ENCODE measurements at regions of chr18 and their contacts with region 1.

Region 1: GRCh38 chr18:66838340-66838987 is 234.6 kb upstream of the CDH19 start:
- DNase-seq: no peak
- H3K4me3 ChIP-seq: no peak overlapping the region
- H3K27ac ChIP-seq: no peak overlapping the region
- H3K4me1 ChIP-seq: no peaks in the 10 kb centered on the region
- H3K27me3 ChIP-seq: no peaks in the 10 kb centered on the region
- CTCF ChIP-seq: no peak
- POLR2A ChIP-seq: no peak

Region 2: DNA sequence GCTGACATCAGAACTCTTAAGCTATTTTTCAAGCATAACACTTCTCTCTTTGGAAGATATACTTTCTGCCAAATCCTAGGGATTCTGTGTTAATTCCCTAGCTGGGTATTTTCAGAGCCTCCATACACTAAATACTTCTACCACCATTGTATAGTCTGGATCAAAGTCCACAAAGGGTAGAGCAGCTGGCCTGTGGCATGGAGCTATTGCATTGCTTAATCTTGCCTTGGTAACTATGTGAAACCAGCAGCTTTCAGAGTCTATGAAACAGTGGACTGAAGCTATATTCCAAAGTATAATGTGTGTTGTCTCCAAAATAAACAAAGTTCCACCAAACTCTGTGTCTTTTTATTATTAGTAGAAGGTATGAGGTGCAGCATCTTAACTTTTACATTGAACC is 62.4 kb after region 1 on chr18:
- intact Hi-C with region 1: loop called (anchors 10 kb)
- DNase-seq: no peak
- H3K4me3 ChIP-seq: no peak overlapping the region
- H3K27ac ChIP-seq: no peak overlapping the region
- H3K4me1 ChIP-seq: no peaks in the 10 kb centered on the region
- H3K27me3 ChIP-seq: no peaks in the 10 kb centered on the region
- CTCF ChIP-seq: no peak
- POLR2A ChIP-seq: no peak

Measured in uterus (tissue), 4 donors.